ENCODE measurements at regions of chr3 and their contacts with region 1.

Region 1: DNA sequence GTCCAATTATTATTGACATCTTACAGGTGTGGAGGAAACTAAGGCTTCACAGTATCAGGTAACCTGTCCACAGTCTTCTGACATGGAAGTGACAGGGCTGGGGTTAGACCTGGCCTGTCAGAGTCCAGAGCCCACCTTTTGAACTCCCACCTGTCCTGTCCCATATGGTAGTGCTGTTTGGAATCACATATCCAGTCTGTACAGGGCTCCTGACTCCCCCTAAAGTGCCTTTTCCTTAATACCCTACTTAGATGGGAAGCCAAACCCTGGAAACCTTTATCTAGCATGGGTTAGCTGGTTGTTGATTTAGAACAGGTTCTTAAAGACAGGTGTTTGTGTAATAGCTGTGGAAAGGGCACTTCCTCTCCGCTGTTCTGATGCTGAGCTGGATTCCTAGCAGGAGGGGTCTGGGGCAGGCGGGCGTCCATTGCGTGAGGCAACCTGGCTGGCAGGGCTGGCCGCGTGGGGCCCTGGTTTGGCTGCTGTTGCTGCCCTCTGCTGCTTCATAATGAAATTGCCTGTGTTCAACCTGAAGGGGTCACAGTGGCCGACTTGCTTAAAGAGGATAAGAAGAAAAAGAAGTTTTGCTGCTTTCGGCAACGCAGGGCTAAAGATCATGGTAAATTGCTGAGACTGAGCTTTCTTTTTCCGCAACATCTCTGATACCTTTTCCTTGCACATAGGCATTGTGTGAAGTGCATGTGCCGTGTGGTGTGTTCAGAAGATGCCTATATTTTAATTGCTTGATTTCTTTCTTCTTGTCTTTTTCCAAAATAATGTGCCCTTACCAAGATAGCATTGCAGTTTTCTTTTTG is 136.2 kb downstream of the CHDH start:
- DNase-seq: peak in 1 of 2 donors; percentile 77
- H3K4me3 ChIP-seq: no peak overlapping the region
- H3K27ac ChIP-seq: no peak overlapping the region
- H3K4me1 ChIP-seq: no peaks in the 10 kb centered on the region
- H3K27me3 ChIP-seq: no peaks in the 10 kb centered on the region
- CTCF ChIP-seq: peak; percentile 67 to 82 (median 77)

Region 2: DNA sequence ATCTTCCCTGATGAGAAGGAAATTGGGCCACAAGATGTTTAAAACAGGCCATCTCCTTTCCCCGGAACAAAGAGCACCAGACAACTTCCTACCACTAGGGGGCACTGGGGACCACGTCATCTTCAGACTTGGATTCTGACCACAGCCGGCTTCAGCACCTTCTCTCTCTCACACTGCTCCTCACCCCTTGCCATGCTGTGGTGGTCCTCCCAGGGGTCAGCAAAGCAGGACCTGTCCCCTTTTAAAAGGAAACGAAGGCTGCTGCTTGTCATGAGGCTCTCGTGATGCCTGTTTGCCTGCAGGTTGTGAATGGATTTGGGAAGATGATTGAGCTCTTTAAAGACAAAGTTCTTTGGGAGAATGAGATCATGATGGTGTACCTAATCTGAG is 596.1 kb before region 1 on chr3:
- intact Hi-C with region 1: loop called (anchors 10 kb)
- DNase-seq: peak; percentile 17 to 90
- H3K4me3 ChIP-seq: no peak overlapping the region
- H3K27ac ChIP-seq: no peak overlapping the region
- H3K4me1 ChIP-seq: no peaks in the 10 kb centered on the region
- H3K27me3 ChIP-seq: no peaks in the 10 kb centered on the region
- CTCF ChIP-seq: peak; percentile 85 to 93 (median 87)

Region 3: GRCh38 chr3:53219895-53220483 is 490.1 kb before region 1 on chr3:
- intact Hi-C with region 1: loop called (anchors 2 kb)
- DNase-seq: peak in 1 of 2 donors; percentile 86
- H3K4me3 ChIP-seq: no peak overlapping the region
- H3K27ac ChIP-seq: no peak overlapping the region
- H3K4me1 ChIP-seq: no peaks in the 10 kb centered on the region
- H3K27me3 ChIP-seq: no peaks in the 10 kb centered on the region
- CTCF ChIP-seq: peak; percentile 73 to 90 (median 89)

Region 4: DNA sequence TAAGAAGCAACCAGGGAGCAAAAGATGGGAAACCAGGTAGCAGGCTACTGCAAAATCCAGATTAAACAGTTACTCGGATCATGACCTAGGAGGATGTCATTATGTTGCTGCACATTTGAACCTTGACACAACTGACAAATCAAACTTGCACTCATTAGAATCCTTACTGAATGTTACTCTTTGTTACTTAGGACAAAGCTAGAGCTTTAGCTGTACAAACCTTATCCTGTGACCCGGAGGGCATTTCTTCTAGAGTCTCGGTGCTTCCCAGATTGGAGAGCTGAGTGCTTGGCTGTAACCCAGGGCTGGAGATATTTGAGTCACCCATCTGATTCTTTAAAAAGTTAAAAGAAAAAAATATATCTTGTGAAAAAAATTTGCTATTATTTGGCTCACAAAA is 406.1 kb before region 1 on chr3:
- intact Hi-C with region 1: loop called (anchors 1 kb)
- DNase-seq: no peak
- H3K4me3 ChIP-seq: no peak overlapping the region
- H3K27ac ChIP-seq: peak overlapping the region in 1 of 2 donors; percentile 22
- H3K4me1 ChIP-seq: peaks cover 0 to 8% of the 10 kb centered on the region in 2 donors
- H3K27me3 ChIP-seq: no peaks in the 10 kb centered on the region
- CTCF ChIP-seq: no peak

Region 5: GRCh38 chr3:53729618-53730017 is 19.6 kb after region 1 on chr3:
- intact Hi-C with region 1: no loop called
- DNase-seq: no peak
- H3K4me3 ChIP-seq: no peak overlapping the region
- H3K27ac ChIP-seq: no peak overlapping the region
- H3K4me1 ChIP-seq: peaks cover 0 to 6% of the 10 kb centered on the region in 2 donors
- H3K27me3 ChIP-seq: no peaks in the 10 kb centered on the region
- CTCF ChIP-seq: no peak

Measured in ascending aorta (tissue), 2 donors.